ENCODE measurements at regions of chr16 and their contacts with region 1.

Region 1: DNA sequence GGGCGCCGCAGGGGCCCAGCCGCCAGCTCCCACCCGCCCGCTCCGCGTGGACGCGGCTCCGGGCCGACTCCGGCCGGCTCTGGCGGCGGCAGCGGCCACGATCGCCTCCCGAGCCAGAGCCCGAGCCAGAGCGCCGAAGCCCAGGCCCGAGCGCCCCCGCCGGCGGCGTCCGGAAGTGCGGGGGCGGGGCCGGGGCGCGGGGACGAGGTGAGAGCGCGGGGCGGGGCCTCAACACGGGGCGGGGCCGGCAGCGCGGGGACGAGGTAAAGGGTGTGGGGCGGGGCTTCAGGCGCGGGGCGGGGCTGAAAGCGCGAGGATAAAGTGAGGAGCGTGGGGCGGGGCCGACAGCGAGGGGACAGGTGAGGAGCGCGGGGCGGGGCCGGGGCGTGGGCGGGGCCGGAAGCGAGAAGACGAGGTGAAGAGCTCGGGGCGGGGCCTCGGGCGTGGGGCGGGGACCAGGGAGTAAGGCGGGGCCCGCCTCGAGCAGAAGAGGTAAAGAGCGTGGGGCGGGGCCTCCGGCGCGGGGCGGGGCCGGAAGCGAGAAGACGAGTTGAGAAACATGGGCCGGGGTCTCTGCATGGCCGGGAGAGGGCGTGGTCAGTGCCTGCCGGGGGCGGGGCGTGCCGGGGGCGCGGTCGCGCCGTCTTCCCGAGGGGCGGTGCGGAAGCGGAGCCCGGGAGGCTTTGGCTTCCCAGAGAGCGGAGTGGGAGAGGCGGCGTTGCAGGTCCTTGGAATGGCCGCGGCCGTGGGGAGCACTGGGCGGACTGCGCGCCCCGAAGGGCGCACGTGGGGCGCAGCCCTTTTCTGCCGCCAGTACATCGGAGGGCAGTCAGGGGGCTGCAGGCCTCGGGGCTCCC is at the start of gene AXIN1:
- H3K4me3 Mint-ChIP-seq: peak within 1 kb of the TSS; percentile 73
- H3K27ac Mint-ChIP-seq: peak within 1 kb of the TSS; percentile 37
- H3K4me1 Mint-ChIP-seq: peaks cover 38% of the 10 kb centered on the region
- H3K27me3 Mint-ChIP-seq: no peaks in the 10 kb centered on the region

Region 2: DNA sequence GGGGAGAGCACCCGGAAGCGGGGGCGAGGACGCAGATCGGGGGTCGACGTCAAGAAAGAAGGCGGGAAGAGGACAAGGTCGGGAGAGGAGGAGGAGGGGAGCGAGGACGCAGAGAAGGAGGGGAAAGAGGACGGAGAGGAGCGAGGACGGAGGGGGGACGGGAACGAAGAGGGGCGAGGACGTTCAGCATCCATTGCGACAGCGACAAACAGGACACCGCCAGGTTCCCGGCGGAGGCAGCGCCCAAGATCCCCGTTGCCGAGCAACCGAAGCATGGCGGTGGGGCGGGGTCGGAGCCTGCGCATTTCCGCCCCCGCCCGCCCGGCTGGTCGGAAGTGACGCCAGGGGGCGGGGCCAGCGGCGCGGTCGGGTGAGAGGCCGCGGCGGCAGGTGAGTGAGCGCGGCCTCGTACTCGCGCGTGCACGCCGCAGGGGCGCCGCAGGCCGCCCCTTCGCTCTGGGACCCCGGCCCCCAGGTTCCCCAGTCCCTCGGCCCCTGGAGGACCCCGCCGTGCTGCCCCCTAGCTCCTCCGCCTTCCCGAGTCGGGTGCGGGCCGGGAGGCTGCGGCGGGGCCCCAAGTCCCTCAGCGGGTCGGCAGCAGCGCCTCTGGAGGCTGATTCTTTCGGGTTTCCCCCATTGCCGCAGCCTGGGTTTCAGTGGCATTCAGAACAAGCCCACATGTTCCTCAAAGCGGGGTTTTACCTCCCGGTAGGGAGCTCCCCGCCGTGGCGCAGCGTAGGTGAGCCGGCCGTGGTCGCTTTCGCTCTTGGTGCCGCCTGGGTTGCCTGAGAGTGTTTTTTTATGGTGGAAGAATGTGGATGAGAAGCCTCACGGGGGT is 118.1 kb before region 1 on chr16 and contains the start of gene FAM234A:
- intact Hi-C with region 1: loop called (anchors 1 kb)
- H3K4me3 Mint-ChIP-seq: peak within 1 kb of the TSS; percentile 93
- H3K27ac Mint-ChIP-seq: peak within 1 kb of the TSS; percentile 100
- H3K4me1 Mint-ChIP-seq: peaks cover 10% of the 10 kb centered on the region
- H3K27me3 Mint-ChIP-seq: no peaks in the 10 kb centered on the region

Region 3: GRCh38 chr16:318628-319027 is 34.1 kb before region 1 on chr16:
- intact Hi-C with region 1: loop called (anchors 5 kb)
- H3K4me3 Mint-ChIP-seq: no peak overlapping the region
- H3K27ac Mint-ChIP-seq: peak overlapping the region; percentile 15
- H3K4me1 Mint-ChIP-seq: peaks cover 13% of the 10 kb centered on the region
- H3K27me3 Mint-ChIP-seq: no peaks in the 10 kb centered on the region